Sigmoid colon (tissue), 7 donors: ENCODE measurements at regions of chr9 and their contacts with region 1.

Region 1: GRCh38 chr9:113591001-113591898 is 127.7 kb downstream of the RGS3 start:
- DNase-seq: peak; percentile 90
- H3K4me3 ChIP-seq: no peak overlapping the region
- H3K27ac ChIP-seq: peak overlapping the region in 3 of 4 donors; percentile 36 to 91 (median 51)
- H3K4me1 ChIP-seq: peaks cover 0 to 51% (median 42%) of the 10 kb centered on the region in 4 donors
- H3K27me3 ChIP-seq: no peaks in the 10 kb centered on the region
- CTCF ChIP-seq: peak; percentile 78 to 91 (median 88)
- EP300 ChIP-seq: no peak
- POLR2A ChIP-seq: no peak

Region 2: GRCh38 chr9:113526841-113527240 is 64.4 kb before region 1 on chr9:
- intact Hi-C with region 1: no loop called
- DNase-seq: peak; percentile 81
- H3K4me3 ChIP-seq: no peak overlapping the region
- H3K27ac ChIP-seq: peak overlapping the region; percentile 74 to 83 (median 80)
- H3K4me1 ChIP-seq: peaks cover 0 to 72% (median 68%) of the 10 kb centered on the region in 4 donors
- H3K27me3 ChIP-seq: no peaks in the 10 kb centered on the region
- CTCF ChIP-seq: no peak
- EP300 ChIP-seq: no peak
- POLR2A ChIP-seq: no peak

Region 3: GRCh38 chr9:113657703-113658544 is 66.7 kb after region 1 on chr9:
- intact Hi-C with region 1: loop called (anchors 1 kb)
- DNase-seq: peak; percentile 91
- H3K4me3 ChIP-seq: no peak overlapping the region
- H3K27ac ChIP-seq: no peak overlapping the region
- H3K4me1 ChIP-seq: peaks cover 0 to 19% (median 12%) of the 10 kb centered on the region in 4 donors
- H3K27me3 ChIP-seq: peaks cover 0 to 7% (median 0%) of the 10 kb centered on the region in 3 donors
- CTCF ChIP-seq: peak; percentile 92 to 97 (median 95)
- EP300 ChIP-seq: no peak
- POLR2A ChIP-seq: no peak

Region 4: DNA sequence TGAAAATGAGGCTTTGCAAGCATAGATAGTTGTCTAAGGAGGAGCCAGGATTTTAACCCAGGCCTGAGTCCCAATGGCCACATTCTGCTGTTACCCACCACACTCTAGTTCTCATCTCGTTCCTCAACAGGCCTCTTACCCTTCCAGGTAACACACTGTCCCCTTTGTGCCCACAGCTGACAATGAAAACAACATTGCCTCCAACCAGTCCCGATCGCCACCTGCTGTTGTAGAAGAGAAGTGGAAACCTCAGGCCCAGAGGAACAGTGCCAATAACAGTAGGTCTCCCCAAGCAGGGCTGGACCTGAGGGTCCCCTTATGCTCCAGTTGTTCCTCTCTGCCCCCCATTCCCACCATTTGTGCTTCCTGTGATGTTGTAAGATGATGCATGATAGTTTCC is 456.5 kb after region 1 on chr9:
- intact Hi-C with region 1: no loop called
- DNase-seq: peak; percentile 19
- H3K4me3 ChIP-seq: no peak overlapping the region
- H3K27ac ChIP-seq: no peak overlapping the region
- H3K4me1 ChIP-seq: no peaks in the 10 kb centered on the region
- H3K27me3 ChIP-seq: no peaks in the 10 kb centered on the region
- CTCF ChIP-seq: peak in 1 of 4 experiments; percentile 14
- EP300 ChIP-seq: no peak
- POLR2A ChIP-seq: no peak